ENCODE measurements at regions of chr19 and their contacts with region 1.

Region 1: GRCh38 chr19:9621156-9622037 is at the start of gene ZNF561:
- H3K4me3 Mint-ChIP-seq: peak within 1 kb of the TSS; percentile 98
- H3K27ac Mint-ChIP-seq: peak within 1 kb of the TSS; percentile 100
- H3K4me1 Mint-ChIP-seq: peaks cover 38% of the 10 kb centered on the region
- H3K27me3 Mint-ChIP-seq: no peaks in the 10 kb centered on the region

Region 2: GRCh38 chr19:9140159-9140874 is 481.1 kb before region 1 on chr19 and contains the start of gene ZNF317:
- intact Hi-C with region 1: loop called (anchors 5 kb)
- H3K4me3 Mint-ChIP-seq: peak within 1 kb of the TSS; percentile 98
- H3K27ac Mint-ChIP-seq: peak within 1 kb of the TSS; percentile 92
- H3K4me1 Mint-ChIP-seq: peaks cover 38% of the 10 kb centered on the region
- H3K27me3 Mint-ChIP-seq: peaks cover 5% of the 10 kb centered on the region

Region 3: GRCh38 chr19:9456018-9456689 is 165.2 kb before region 1 on chr19:
- intact Hi-C with region 1: no loop called
- H3K4me3 Mint-ChIP-seq: no peak overlapping the region
- H3K27ac Mint-ChIP-seq: no peak overlapping the region
- H3K4me1 Mint-ChIP-seq: no peaks in the 10 kb centered on the region
- H3K27me3 Mint-ChIP-seq: no peaks in the 10 kb centered on the region

Region 4: DNA sequence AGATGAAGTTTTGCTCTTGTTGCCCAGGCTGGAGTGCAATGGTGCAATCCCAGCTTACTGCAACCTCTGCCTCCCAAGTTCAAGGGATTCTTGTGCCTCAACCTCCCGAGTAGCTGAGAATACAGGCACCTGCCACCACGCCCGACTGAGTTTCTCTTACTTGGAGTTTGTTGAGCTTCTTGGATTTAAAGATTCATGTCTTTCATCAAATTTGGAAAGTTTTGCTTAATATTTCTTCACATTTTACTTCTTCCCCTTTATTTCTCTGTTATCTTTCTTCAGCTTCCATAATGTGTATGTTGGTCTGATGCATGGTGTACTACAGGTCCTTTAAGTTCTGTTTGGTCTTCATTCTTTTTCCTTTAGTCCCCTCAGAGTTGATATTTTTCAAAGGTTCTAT is 114.1 kb before region 1 on chr19:
- intact Hi-C with region 1: no loop called
- H3K4me3 Mint-ChIP-seq: no peak overlapping the region
- H3K27ac Mint-ChIP-seq: no peak overlapping the region
- H3K4me1 Mint-ChIP-seq: no peaks in the 10 kb centered on the region
- H3K27me3 Mint-ChIP-seq: no peaks in the 10 kb centered on the region

Region 5: DNA sequence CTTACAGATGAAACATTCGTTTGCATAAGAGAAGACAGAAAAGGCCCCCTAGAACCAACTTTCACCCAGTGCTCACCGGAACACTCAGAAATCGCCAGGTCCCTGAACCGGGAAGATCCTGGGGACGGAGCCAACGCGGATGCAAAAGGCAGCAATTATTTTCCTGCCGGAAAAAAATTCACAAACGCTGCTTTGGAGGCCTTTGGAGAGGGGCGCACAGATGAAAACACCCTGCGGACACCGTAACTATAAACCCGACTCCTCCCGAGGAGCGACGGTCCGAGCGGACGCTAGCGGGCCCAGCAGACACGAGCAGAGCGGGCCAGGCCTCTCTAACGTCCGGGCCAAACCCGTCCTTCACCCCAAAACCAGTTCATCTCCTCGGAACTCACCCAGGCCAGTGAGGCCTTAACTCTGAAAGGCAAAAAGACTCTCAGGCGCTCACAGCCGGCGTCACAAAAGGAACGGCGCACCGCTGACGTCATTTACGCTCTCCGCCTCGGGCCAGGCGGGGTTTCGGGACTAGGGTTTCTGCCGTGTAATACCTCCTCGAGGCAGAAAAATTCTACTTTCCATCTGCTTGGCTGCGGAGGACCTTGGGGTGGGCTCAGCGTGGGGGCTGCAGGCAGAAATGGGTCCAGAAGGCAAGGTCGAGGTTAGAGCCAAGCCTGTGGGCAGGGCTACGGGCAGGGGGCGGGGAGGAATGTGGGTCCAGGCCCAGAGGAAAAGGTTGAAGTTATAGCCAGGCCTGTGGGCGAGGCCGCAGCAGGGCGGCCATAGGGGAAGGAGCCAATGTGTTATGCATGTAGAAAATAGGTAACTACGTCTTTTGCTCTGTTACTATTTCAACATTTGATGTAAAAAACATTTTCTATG is 83.0 kb before region 1 on chr19 and contains the start of gene ZNF426:
- intact Hi-C with region 1: loop called (anchors 5 kb)
- H3K4me3 Mint-ChIP-seq: peak within 1 kb of the TSS; percentile 93
- H3K27ac Mint-ChIP-seq: peak within 1 kb of the TSS; percentile 99
- H3K4me1 Mint-ChIP-seq: no peaks in the 10 kb centered on the region
- H3K27me3 Mint-ChIP-seq: no peaks in the 10 kb centered on the region

Region 6: GRCh38 chr19:9610484-9611113 is 10.8 kb before region 1 on chr19:
- intact Hi-C with region 1: no loop called
- H3K4me3 Mint-ChIP-seq: no peak overlapping the region
- H3K27ac Mint-ChIP-seq: no peak overlapping the region
- H3K4me1 Mint-ChIP-seq: no peaks in the 10 kb centered on the region
- H3K27me3 Mint-ChIP-seq: no peaks in the 10 kb centered on the region

Region 7: GRCh38 chr19:9641810-9642209 is 20.4 kb after region 1 on chr19:
- intact Hi-C with region 1: no loop called
- H3K4me3 Mint-ChIP-seq: no peak overlapping the region
- H3K27ac Mint-ChIP-seq: no peak overlapping the region
- H3K4me1 Mint-ChIP-seq: no peaks in the 10 kb centered on the region
- H3K27me3 Mint-ChIP-seq: no peaks in the 10 kb centered on the region

Region 8: GRCh38 chr19:9674663-9675357 is 53.4 kb after region 1 on chr19 and contains the start of gene ZNF562:
- intact Hi-C with region 1: loop called (anchors 2 kb)
- H3K4me3 Mint-ChIP-seq: peak within 1 kb of the TSS; percentile 98
- H3K27ac Mint-ChIP-seq: peak within 1 kb of the TSS; percentile 99
- H3K4me1 Mint-ChIP-seq: peaks cover 23% of the 10 kb centered on the region
- H3K27me3 Mint-ChIP-seq: no peaks in the 10 kb centered on the region

Region 9: DNA sequence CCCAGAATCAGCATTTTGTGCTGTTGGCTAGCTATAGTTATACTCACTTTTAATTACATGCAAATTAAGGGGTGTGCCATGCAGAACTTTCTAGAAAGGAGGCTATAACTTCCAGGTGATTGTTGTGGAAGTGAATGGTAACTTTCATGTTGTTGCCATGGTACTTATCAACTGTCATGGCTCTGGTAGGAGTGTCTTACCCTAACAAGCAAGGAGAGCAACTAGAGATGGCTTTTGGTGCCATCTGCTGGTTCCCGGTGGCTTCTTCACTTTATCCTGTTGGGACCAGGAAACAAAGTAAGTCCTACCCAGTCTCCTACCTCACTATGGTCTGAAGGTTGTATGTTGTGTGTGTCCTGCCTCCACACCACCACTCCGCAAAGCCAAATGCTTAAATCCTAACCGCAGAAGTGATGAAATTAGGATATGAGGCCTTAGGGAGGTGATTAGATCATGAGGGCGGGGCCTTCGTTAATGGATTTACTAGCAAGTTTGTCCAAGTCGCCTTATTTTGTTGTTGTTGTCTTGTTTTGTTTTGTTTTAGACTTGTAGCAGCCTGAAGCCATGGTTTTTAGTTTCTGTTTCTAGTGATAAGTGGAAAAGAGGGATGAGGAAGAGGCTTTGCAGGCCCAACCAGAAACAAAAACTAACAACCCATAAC is 174.8 kb after region 1 on chr19:
- intact Hi-C with region 1: loop called (anchors 1 kb)
- H3K4me3 Mint-ChIP-seq: no peak overlapping the region
- H3K27ac Mint-ChIP-seq: peak overlapping the region; percentile 72
- H3K4me1 Mint-ChIP-seq: peaks cover 17% of the 10 kb centered on the region
- H3K27me3 Mint-ChIP-seq: no peaks in the 10 kb centered on the region

Measured in dendritic cell treated with granulocyte-macrophage colony-stimulating factor and Interleukin-4, amounts not matched to agents 40 ng/mL and 50 ng/mL, for 4 days (primary cell).